ENCODE measurements at regions of chr15 and their contacts with region 1.

Region 1: GRCh38 chr15:75029378-75030022 is 6.1 kb downstream of the PPCDC start:
- DNase-seq: peak; percentile 79
- H3K4me3 ChIP-seq: peak overlapping the region in 3 of 4 donors; percentile 18 to 57 (median 32)
- H3K27ac ChIP-seq: peak overlapping the region; percentile 77 to 93 (median 84)
- H3K4me1 ChIP-seq: peaks cover 31 to 69% (median 42%) of the 10 kb centered on the region in 3 donors
- H3K27me3 ChIP-seq: no peaks in the 10 kb centered on the region
- CTCF ChIP-seq: peak; percentile 92 to 99 (median 96)
- POLR2A ChIP-seq: no peak

Region 2: GRCh38 chr15:74873036-74873755 is 156.3 kb before region 1 on chr15 and contains the start of gene SCAMP2:
- intact Hi-C with region 1: no loop called
- DNase-seq: peak; percentile 75
- H3K4me3 ChIP-seq: peak within 1 kb of the TSS; percentile 59 to 98 (median 75)
- H3K27ac ChIP-seq: peak within 1 kb of the TSS; percentile 94 to 98 (median 96)
- H3K4me1 ChIP-seq: peaks cover 32 to 54% (median 48%) of the 10 kb centered on the region in 3 donors
- H3K27me3 ChIP-seq: no peaks in the 10 kb centered on the region
- CTCF ChIP-seq: no peak
- POLR2A ChIP-seq: peak in 3 of 4 donors; percentile 53 to 85 (median 72)
- total RNA-seq, gene SCAMP2: 65.8 to 131 (median 88.7) TPM

Region 3: GRCh38 chr15:74920456-74920855 is 109.0 kb before region 1 on chr15:
- intact Hi-C with region 1: no loop called
- DNase-seq: no peak
- H3K4me3 ChIP-seq: no peak overlapping the region
- H3K27ac ChIP-seq: no peak overlapping the region
- H3K4me1 ChIP-seq: no peaks in the 10 kb centered on the region
- H3K27me3 ChIP-seq: no peaks in the 10 kb centered on the region
- CTCF ChIP-seq: no peak
- POLR2A ChIP-seq: no peak

Region 4: GRCh38 chr15:75204340-75205063 is 175.0 kb after region 1 on chr15:
- intact Hi-C with region 1: loop called (anchors 5 kb)
- DNase-seq: peak; percentile 71
- H3K4me3 ChIP-seq: peak overlapping the region in 3 of 4 donors; percentile 75 to 98 (median 95)
- H3K27ac ChIP-seq: peak overlapping the region; percentile 95 to 99 (median 97)
- H3K4me1 ChIP-seq: peaks cover 34 to 84% (median 45%) of the 10 kb centered on the region in 3 donors
- H3K27me3 ChIP-seq: no peaks in the 10 kb centered on the region
- CTCF ChIP-seq: peak; percentile 91 to 98 (median 96)
- POLR2A ChIP-seq: no peak